Heart right ventricle (tissue), 16 donors: ENCODE measurements at regions of chr1 and their contacts with region 1.

Region 1: GRCh38 chr1:6466023-6466422 is at the start of gene TNFRSF25:
- DNase-seq: no peak
- ATAC-seq: no peak
- H3K4me3 ChIP-seq: peak within 1 kb of the TSS in 2 of 10 donors; percentile 17 to 50
- H3K27ac ChIP-seq: peak within 1 kb of the TSS in 1 of 10 donors; percentile 65
- H3K4me1 ChIP-seq: peaks cover 0 to 16% (median 3%) of the 10 kb centered on the region in 9 donors
- H3K27me3 ChIP-seq: peaks cover 0 to 35% (median 7%) of the 10 kb centered on the region in 7 donors
- CTCF ChIP-seq: no peak
- total RNA-seq, gene TNFRSF25: 4.0 to 12.0 (median 7.3) TPM

Region 2: DNA sequence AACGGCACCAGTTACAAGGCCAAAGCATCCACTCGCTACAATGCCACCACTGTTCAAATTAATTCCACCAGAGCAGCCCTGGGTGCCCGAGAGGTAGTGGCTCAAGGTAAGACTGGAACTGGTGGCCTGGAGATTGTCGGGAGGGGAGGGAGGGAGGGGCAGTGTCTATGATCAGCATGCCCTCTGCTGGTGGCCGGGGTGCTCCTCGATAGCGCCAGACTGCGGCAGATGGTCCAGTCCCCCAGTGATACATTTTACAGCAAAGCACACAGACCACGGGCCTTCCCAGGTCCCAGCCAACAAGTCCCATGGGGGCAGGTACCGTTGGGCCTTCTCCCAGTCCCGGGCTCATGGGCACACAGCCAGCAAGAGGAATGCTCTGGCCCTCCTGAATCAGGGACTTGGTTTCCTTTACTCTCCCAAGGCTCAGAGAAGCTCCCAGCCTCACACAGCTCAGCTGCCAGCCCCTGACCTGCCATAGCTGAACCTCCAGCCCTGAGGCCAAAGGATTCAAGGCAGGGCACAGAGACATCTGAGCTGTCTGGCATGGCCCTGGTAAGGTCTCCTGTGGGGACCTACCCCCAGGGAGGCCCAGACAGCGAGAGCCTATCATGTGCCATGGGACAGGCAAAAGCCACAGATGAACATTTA is 87.8 kb before region 1 on chr1:
- intact Hi-C with region 1: no loop called
- DNase-seq: no peak
- ATAC-seq: no peak
- H3K4me3 ChIP-seq: no peak overlapping the region
- H3K27ac ChIP-seq: no peak overlapping the region
- H3K4me1 ChIP-seq: no peaks in the 10 kb centered on the region
- H3K27me3 ChIP-seq: no peaks in the 10 kb centered on the region
- CTCF ChIP-seq: no peak

Region 3: DNA sequence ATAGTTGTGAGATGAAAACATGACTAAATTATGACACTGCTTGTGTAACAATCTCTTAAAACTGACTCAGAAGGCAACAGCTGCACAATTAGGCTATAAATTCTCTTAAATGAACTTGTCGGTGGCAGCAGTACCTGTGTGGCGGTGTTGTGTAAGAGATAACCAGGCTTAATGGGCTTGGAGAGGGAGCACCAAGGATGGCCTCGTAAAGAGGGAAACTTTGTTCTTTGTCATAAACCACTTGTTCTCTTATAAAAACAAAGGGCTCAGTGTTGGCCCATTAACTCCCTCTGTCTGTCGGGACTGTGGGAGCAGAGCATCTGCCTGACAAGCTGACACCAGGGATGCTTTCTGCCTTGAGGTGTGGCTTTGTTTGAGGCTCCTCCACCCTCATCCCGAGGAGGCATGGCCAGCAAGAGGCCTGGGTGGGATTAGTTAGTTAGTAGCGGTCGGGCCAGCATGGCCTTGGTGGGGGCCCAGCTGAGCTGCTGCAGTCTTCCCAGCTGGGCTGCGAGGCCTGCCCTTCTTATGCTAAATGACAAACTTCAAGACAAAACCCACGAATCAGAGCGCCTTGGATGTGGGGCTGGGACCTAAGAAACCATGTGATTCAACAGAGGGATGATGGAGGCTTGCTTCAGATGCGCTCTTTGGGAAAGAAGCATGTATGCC is 490.6 kb after region 1 on chr1:
- intact Hi-C with region 1: loop called in 1 of 10 experiments (anchors 5 kb)
- DNase-seq: no peak
- ATAC-seq: no peak
- H3K4me3 ChIP-seq: no peak overlapping the region
- H3K27ac ChIP-seq: no peak overlapping the region
- H3K4me1 ChIP-seq: peaks cover 0 to 17% (median 9%) of the 10 kb centered on the region in 9 donors
- H3K27me3 ChIP-seq: peaks cover 0 to 3% (median 0%) of the 10 kb centered on the region in 7 donors
- CTCF ChIP-seq: no peak